SK-N-SH (cell line): ENCODE measurements at regions of chr14 and their contacts with region 1.

Region 1: GRCh38 chr14:103920981-103921854 is 7.0 kb upstream of the TDRD9 start:
- DNase-seq: peak; percentile 95
- H3K4me3 ChIP-seq: peak overlapping the region; percentile 77 to 100
- H3K27ac ChIP-seq: peak overlapping the region; percentile 56 to 57; a peak in 2 of 4 replicates
- H3K4me1 ChIP-seq: peaks cover 0 to 2% of the 10 kb centered on the region in 2 experiments; a peak in 1 of 4 replicates
- H3K27me3 ChIP-seq: no peaks in the 10 kb centered on the region
- CTCF ChIP-seq: peak; percentile 92
- EP300 ChIP-seq: peak; percentile 9 to 22; a peak in 2 of 4 replicates
- RAD21 ChIP-seq: peak; percentile 48

Region 2: GRCh38 chr14:103887170-103887501 is 34.1 kb before region 1 on chr14:
- CTCF ChIA-PET with region 1: no interaction called
- POLR2A ChIA-PET with region 1: no interaction called
- DNase-seq: no peak
- H3K4me3 ChIP-seq: no peak overlapping the region
- H3K27ac ChIP-seq: no peak overlapping the region
- H3K4me1 ChIP-seq: peaks cover 0 to 24% of the 10 kb centered on the region in 2 experiments; a peak in 1 of 4 replicates
- H3K27me3 ChIP-seq: no peaks in the 10 kb centered on the region
- CTCF ChIP-seq: no peak
- EP300 ChIP-seq: no peak
- RAD21 ChIP-seq: no peak

Region 3: DNA sequence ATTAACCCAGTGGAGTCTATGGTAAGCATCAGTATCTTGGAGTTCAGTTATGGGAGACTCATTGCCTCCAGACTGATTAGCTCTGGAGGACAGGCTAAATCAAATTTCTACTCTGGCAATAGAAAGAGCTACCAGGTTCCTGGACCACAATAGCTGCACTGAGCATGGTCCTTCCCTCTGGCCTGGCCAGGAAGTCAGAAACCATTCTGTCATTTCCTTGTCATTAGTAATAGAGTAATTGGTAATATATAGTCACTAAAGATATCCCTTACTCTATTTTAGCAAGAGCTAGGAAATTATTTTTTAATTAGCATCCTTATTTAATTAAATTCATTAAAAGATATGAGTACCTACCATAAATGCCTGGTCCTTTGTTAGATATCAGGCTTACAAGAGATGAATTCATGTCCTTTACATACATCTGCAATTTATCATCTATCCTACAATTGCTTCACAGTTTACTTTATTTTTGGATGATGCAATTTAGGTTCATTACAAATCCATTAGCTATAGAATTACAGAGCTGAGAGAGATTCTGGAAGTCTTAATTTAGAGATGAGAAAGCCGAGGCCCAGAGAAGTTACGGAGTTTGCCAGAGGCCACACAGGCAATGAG is 16.6 kb before region 1 on chr14:
- CTCF ChIA-PET with region 1: interaction called, 31 read pairs
- POLR2A ChIA-PET with region 1: no interaction called
- DNase-seq: peak; percentile 80
- H3K4me3 ChIP-seq: no peak overlapping the region
- H3K27ac ChIP-seq: peak overlapping the region in 1 of 2 experiments; percentile 64; a peak in 2 of 4 replicates
- H3K4me1 ChIP-seq: peaks cover 0 to 17% of the 10 kb centered on the region in 2 experiments; a peak in 1 of 4 replicates
- H3K27me3 ChIP-seq: no peaks in the 10 kb centered on the region
- CTCF ChIP-seq: no peak
- EP300 ChIP-seq: peak in 1 of 2 experiments; percentile 76; a peak in 2 of 4 replicates
- RAD21 ChIP-seq: no peak; the same call in 1 of the 2 replicates

Region 4: DNA sequence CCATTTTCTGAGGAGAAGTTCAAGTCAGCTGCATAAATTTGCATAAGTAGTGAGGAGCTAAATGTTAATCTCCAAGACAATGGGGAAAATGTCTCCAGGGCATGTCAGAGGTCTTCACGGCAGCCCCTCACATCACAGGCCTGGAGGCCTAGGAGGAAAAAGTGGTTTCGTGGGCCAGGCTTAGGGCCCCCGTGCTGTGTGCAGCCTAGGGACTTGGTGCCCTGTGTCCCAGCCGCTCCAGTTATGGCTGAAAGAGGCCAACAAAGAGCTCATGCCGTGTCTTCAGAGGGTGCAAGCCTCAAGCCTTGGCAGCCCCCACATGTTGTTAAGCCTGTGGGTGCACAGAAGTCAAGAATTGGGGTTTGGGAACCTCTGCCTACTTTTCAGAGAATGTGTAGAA is 63.0 kb after region 1 on chr14:
- CTCF ChIA-PET with region 1: interaction called, 11 read pairs
- POLR2A ChIA-PET with region 1: no interaction called
- DNase-seq: no peak
- H3K4me3 ChIP-seq: no peak overlapping the region
- H3K27ac ChIP-seq: no peak overlapping the region
- H3K4me1 ChIP-seq: no peaks in the 10 kb centered on the region
- H3K27me3 ChIP-seq: no peaks in the 10 kb centered on the region; the same call in 1 of the 2 replicates
- CTCF ChIP-seq: no peak
- EP300 ChIP-seq: no peak
- RAD21 ChIP-seq: no peak